Activated CD4-positive, alpha-beta T cell treated with anti-CD3 and anti-CD28 coated beads, Interleukin-2, amount 10 ng/mL, durations not matched to agents 24 days and 14 days (primary cell): ENCODE measurements at regions of chr10 and their contacts with region 1.

Region 1: DNA sequence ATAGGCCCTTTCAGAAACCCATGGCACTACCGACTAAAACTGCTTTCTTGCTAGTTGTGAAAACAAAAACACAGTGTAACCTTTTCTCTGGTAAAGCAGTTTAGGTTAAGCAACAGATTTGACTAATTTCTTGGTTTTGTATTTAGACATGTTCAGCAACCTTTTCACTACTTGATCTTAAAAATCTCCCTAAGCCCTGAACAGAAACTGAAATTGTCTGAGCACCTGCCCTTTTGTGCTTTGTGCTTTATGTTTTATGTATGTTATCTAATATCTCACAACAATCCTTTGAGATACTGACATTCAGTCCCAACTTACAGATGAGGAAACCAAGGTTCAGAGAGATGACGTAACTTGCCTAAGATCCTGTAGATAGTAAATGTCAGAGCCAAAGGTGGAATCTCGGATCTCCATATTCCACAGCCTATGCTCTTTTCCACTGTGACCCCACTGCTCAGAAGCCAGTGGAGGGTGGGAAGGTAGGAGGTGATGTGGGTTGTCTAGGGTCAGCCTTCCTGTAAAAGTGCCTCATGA is 146.6 kb downstream of the LCOR start:
- DNase-seq: no peak
- H3K4me3 Mint-ChIP-seq: peak overlapping the region; percentile 53
- H3K27ac Mint-ChIP-seq: peak overlapping the region; percentile 91
- H3K4me1 Mint-ChIP-seq: peaks cover 23% of the 10 kb centered on the region
- H3K27me3 Mint-ChIP-seq: no peaks in the 10 kb centered on the region

Region 2: GRCh38 chr10:96570983-96571964 is 407.4 kb before region 1 on chr10:
- intact Hi-C with region 1: no loop called
- DNase-seq: no peak
- H3K4me3 Mint-ChIP-seq: no peak overlapping the region
- H3K27ac Mint-ChIP-seq: no peak overlapping the region
- H3K4me1 Mint-ChIP-seq: peaks cover 30% of the 10 kb centered on the region
- H3K27me3 Mint-ChIP-seq: no peaks in the 10 kb centered on the region

Region 3: GRCh38 chr10:96896884-96897589 is 81.7 kb before region 1 on chr10:
- intact Hi-C with region 1: loop called (anchors 5 kb)
- DNase-seq: no peak
- H3K4me3 Mint-ChIP-seq: peak overlapping the region; percentile 25
- H3K27ac Mint-ChIP-seq: peak overlapping the region; percentile 36
- H3K4me1 Mint-ChIP-seq: peaks cover 21% of the 10 kb centered on the region
- H3K27me3 Mint-ChIP-seq: no peaks in the 10 kb centered on the region

Region 4: GRCh38 chr10:97016728-97017473 is 38.2 kb after region 1 on chr10:
- intact Hi-C with region 1: loop called (anchors 2 kb)
- DNase-seq: peak; percentile 75
- H3K4me3 Mint-ChIP-seq: peak overlapping the region; percentile 29
- H3K27ac Mint-ChIP-seq: peak overlapping the region; percentile 76
- H3K4me1 Mint-ChIP-seq: peaks cover 19% of the 10 kb centered on the region
- H3K27me3 Mint-ChIP-seq: no peaks in the 10 kb centered on the region

Region 5: DNA sequence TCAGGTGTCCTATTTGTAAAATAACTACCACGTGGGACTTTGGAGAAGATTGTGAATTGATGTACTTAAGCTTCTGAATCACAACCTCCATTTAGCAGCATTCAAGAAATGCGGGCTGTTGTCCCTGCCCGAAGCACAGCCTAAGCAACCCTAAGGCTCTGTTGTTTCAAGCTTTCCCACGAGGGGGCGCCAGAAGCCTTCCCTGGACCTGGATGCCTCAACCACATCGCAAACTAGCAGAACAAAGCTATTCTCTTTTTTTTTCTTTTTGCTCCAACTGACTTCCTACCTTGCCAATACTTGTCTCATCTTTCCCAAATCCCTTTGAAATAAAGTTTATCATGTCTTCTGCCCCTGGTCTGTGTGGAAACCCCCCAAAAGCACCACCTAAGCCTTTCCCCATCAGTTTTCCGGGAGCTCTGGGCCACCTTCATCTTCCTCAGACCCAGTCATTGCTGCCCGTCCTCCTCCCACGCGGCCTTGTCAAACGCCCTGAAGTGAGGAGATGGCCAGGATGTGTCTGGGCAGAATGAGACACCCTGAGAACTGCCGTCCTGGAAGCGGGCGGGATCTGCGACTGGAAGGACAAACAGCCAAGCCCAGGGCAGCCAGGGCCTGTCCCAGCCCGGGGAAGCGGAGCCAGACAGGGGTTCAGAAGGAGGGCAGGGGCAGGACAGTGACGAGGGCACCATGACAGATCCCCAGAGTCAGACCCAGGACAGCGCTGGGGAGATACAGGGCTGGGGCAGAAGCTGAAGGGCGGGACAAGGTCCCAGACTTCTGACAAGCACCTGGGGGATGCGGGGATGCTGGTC is 94.4 kb after region 1 on chr10:
- intact Hi-C with region 1: no loop called
- DNase-seq: peak; percentile 93
- H3K4me3 Mint-ChIP-seq: no peak overlapping the region
- H3K27ac Mint-ChIP-seq: no peak overlapping the region
- H3K4me1 Mint-ChIP-seq: peaks cover 8% of the 10 kb centered on the region
- H3K27me3 Mint-ChIP-seq: peaks cover 10% of the 10 kb centered on the region